ENCODE measurements at regions of chr4 and their contacts with region 1.

Region 1: GRCh38 chr4:20299515-20299914 is 47.8 kb downstream of the SLIT2 start:
- DNase-seq: no peak
- H3K4me3 ChIP-seq: no peak overlapping the region
- H3K27ac ChIP-seq: no peak overlapping the region
- H3K4me1 ChIP-seq: peaks cover 0 to 45% (median 25%) of the 10 kb centered on the region in 4 donors
- H3K27me3 ChIP-seq: no peaks in the 10 kb centered on the region
- CTCF ChIP-seq: peak in 2 of 3 experiments; percentile 25 to 32
- EP300 ChIP-seq: no peak
- POLR2A ChIP-seq: no peak

Region 2: DNA sequence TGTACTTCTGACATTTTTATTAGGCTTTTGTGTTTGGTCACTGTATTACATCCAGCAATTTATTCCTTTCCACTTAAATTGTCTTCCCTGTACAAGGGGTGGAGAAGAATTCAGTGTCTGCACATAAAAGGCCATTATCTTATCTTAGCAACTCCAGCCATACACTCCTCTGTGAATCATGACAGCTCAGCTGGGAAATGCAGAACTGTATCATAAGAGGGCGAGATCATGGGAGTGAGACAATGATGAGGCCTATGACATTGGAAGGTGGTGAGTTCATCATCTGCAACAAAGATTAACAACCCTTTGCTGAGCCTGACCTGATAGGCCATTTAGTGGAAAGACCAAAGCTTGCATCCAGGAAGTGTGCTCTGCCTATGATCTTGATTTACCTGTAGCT is 14.5 kb before region 1 on chr4:
- intact Hi-C with region 1: no loop called
- DNase-seq: no peak
- H3K4me3 ChIP-seq: no peak overlapping the region
- H3K27ac ChIP-seq: no peak overlapping the region
- H3K4me1 ChIP-seq: peaks cover 0 to 14% (median 3%) of the 10 kb centered on the region in 4 donors
- H3K27me3 ChIP-seq: no peaks in the 10 kb centered on the region
- CTCF ChIP-seq: no peak
- EP300 ChIP-seq: no peak
- POLR2A ChIP-seq: no peak

Region 3: GRCh38 chr4:20370274-20370673 is 70.8 kb after region 1 on chr4:
- intact Hi-C with region 1: no loop called
- DNase-seq: no peak
- H3K4me3 ChIP-seq: no peak overlapping the region
- H3K27ac ChIP-seq: no peak overlapping the region
- H3K4me1 ChIP-seq: peaks cover 0 to 50% (median 40%) of the 10 kb centered on the region in 4 donors
- H3K27me3 ChIP-seq: no peaks in the 10 kb centered on the region
- CTCF ChIP-seq: no peak
- EP300 ChIP-seq: no peak
- POLR2A ChIP-seq: no peak

Region 4: GRCh38 chr4:20554134-20554533 is 254.6 kb after region 1 on chr4:
- intact Hi-C with region 1: loop called (anchors 10 kb)
- DNase-seq: no peak
- H3K4me3 ChIP-seq: no peak overlapping the region
- H3K27ac ChIP-seq: no peak overlapping the region
- H3K4me1 ChIP-seq: no peaks in the 10 kb centered on the region
- H3K27me3 ChIP-seq: no peaks in the 10 kb centered on the region
- CTCF ChIP-seq: no peak
- EP300 ChIP-seq: no peak
- POLR2A ChIP-seq: no peak